HepG2 (cell line): ENCODE measurements at regions of chr6 and their contacts with region 1.

Region 1: DNA sequence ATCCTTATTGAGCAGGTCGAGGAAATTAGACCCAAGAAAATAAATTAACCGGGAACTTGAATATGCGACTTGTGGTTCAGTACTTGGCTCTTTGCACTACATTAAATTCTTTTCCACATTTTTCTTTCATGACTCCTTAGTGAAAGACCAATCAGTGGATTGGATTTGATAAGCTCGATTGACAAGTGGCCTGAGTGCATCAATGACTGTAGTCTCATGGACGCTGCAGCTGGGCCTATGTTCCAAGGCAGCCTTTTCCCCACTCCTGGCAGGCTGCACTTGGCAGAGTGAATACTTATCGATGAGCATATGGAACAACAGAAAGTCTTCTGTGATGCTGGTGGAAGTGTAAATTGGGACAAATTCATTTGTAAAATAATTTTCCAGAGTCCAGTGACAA is 210.8 kb upstream of the EXOC2 start:
- DNase-seq: no peak
- ATAC-seq: no peak
- H3K4me3 ChIP-seq: no peak overlapping the region
- H3K27ac ChIP-seq: no peak overlapping the region
- H3K4me1 ChIP-seq: peaks cover 30% of the 10 kb centered on the region
- H3K27me3 ChIP-seq: peaks cover 2 to 15% of the 10 kb centered on the region in 2 experiments; a peak in 2 of 5 replicates
- CTCF ChIP-seq: no peak
- EP300 ChIP-seq: no peak
- POLR2A ChIP-seq: no peak
- RAD21 ChIP-seq: no peak

Region 2: GRCh38 chr6:373751-374724 is 529.7 kb before region 1 on chr6:
- CTCF ChIA-PET with region 1: no interaction called
- POLR2A ChIA-PET with region 1: no interaction called
- in situ Hi-C with region 1: no loop called
- intact Hi-C with region 1: no loop called
- DNase-seq: no peak
- ATAC-seq: no peak
- H3K4me3 ChIP-seq: no peak overlapping the region
- H3K27ac ChIP-seq: no peak overlapping the region
- H3K4me1 ChIP-seq: no peaks in the 10 kb centered on the region
- H3K27me3 ChIP-seq: peaks cover 8 to 79% of the 10 kb centered on the region in 2 experiments; a peak in 3 of 5 replicates
- CTCF ChIP-seq: 0 out of 2 replicates have a peak, but pooled peaks have one; percentile 4
- EP300 ChIP-seq: no peak
- POLR2A ChIP-seq: no peak
- RAD21 ChIP-seq: no peak

Region 3: DNA sequence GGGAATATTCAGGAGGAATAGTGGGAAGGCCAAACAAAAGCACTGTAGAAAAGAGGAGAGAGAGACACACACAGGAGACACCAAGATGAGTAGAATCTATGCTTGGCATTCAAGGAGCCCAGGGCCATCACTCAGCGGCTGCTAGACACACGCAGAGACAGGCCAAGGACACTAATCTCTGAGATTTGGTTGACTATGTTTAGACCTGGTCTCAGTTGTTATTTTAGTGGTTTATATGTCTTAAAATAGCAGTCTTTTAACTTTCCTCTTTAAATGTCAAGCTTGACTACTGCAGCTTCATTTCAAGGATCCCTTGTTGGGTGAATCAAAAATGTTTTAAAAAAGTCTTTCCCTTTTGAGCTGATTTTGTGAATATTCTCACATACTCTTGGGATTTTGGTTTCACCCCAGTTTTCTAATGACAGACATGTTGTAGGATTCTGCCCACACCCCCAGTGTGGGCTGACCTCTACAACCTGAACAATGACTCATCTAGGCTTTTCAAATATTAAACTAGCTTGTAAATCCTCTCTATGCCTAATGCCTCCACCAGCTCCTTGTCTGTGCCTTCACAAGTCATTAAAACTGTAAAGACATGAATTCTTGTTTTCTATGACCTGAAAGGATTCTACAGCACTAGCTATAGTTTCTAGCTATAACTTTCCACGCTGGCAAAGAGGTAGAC is 68.1 kb before region 1 on chr6:
- CTCF ChIA-PET with region 1: no interaction called
- POLR2A ChIA-PET with region 1: interaction called, 42 read pairs
- in situ Hi-C with region 1: no loop called
- intact Hi-C with region 1: no loop called
- DNase-seq: no peak
- ATAC-seq: peak; percentile 48; the same call in 1 of the 3 replicates
- H3K4me3 ChIP-seq: no peak overlapping the region
- H3K27ac ChIP-seq: no peak overlapping the region
- H3K4me1 ChIP-seq: peaks cover 33% of the 10 kb centered on the region
- H3K27me3 ChIP-seq: peaks cover 1 to 4% of the 10 kb centered on the region in 2 experiments; a peak in 1 of 5 replicates
- CTCF ChIP-seq: no peak
- EP300 ChIP-seq: no peak
- POLR2A ChIP-seq: no peak
- RAD21 ChIP-seq: no peak

Region 4: GRCh38 chr6:1325461-1326309 is 421.9 kb after region 1 on chr6:
- CTCF ChIA-PET with region 1: no interaction called
- POLR2A ChIA-PET with region 1: interaction called, 18 read pairs
- in situ Hi-C with region 1: no loop called
- intact Hi-C with region 1: no loop called
- DNase-seq: peak; percentile 99
- ATAC-seq: peak; percentile 85
- H3K4me3 ChIP-seq: peak overlapping the region; percentile 6 to 34 (median 14); a peak in 2 of 6 replicates
- H3K27ac ChIP-seq: peak overlapping the region; percentile 70
- H3K4me1 ChIP-seq: peaks cover 77% of the 10 kb centered on the region
- H3K27me3 ChIP-seq: no peaks in the 10 kb centered on the region
- CTCF ChIP-seq: no peak
- EP300 ChIP-seq: peak; percentile 81 to 94; a peak in 3 of 4 replicates
- POLR2A ChIP-seq: peak in 1 of 2 experiments; percentile 51; a peak in 1 of 4 replicates
- RAD21 ChIP-seq: no peak

Region 5: DNA sequence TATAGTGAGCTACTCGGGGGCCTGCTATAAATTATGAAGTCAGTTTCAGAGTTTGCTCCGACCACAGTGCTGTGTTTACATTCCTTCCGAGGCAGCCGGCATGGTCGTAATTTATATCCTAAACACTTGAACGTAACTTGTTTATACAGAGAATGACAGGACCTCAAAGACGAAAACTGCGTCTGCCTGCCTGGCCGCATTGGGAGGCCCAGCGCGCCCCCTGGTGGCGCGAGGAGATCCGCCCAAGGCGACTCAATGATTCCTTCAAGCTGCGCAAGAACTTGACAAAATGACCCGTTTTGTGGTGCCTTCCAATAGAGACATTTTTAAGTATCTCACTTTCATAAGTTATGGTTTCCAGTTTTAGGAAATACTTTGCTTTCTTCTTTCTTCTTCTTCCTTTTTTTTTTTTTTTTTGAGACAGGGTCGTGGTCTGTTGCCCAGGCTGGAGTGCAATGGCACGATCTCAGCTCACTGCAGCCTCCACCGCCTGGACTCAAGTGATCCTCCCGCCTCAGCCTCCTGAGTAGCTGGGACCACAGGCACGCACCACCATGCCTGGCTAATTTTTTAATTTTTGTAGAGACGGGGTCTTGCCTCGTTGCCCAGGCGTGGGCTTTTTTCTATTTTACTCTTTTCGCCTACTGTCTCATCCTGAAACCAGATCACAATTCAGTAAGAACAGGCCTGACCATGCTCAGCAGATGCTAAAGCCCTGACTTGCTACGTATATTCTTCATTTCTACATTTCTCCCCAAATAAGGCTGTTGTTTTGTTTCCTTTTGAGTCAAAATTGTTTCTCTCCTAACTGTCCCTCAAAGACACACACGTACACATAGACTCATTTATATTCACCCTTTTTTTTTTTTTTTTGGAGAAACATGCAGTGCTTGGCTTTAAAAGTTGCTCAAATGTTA is 493.4 kb after region 1 on chr6:
- CTCF ChIA-PET with region 1: no interaction called
- POLR2A ChIA-PET with region 1: no interaction called
- in situ Hi-C with region 1: no loop called
- intact Hi-C with region 1: loop called (anchors 5 kb)
- DNase-seq: peak; percentile 31
- ATAC-seq: peak; percentile 67
- H3K4me3 ChIP-seq: no peak overlapping the region
- H3K27ac ChIP-seq: no peak overlapping the region
- H3K4me1 ChIP-seq: no peaks in the 10 kb centered on the region
- H3K27me3 ChIP-seq: peaks cover 35 to 93% of the 10 kb centered on the region in 2 experiments; a peak in 4 of 5 replicates
- CTCF ChIP-seq: peak; percentile 91
- EP300 ChIP-seq: no peak
- POLR2A ChIP-seq: no peak
- RAD21 ChIP-seq: peak; percentile 79

Region 6: DNA sequence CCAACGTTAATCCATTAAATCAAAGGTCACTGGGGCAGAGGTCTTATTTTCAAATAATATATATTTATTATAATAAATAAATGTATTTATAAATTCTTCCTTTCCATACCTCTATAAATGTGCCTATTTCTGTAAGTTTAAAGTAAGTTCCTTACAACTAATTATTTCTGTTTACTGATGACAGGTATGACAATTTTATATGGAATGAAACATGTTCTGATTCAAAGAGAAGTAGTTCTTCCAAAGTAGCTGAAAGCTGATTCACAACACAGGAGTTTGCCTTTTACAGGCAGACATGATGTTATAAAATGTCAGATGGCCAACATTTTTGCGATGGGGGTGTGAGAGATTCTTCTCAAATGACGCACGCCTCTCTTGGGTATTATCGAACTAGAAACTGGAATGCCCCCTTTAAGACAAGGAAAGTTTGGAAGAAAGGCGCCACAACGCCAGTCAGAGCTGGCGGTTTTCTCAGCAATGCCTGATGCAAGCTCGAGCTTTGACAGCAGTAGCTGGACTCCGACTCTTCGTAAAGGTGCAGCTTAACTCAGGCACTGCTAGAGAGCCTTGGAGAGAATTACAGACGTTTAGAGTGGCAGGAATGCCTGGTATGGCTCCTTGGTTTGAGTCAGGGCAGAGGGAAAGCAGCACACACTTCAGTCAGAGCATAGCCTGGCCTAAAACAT is 798.0 kb after region 1 on chr6:
- CTCF ChIA-PET with region 1: no interaction called
- POLR2A ChIA-PET with region 1: no interaction called
- in situ Hi-C with region 1: no loop called
- intact Hi-C with region 1: no loop called
- DNase-seq: no peak
- ATAC-seq: no peak
- H3K4me3 ChIP-seq: no peak overlapping the region
- H3K27ac ChIP-seq: no peak overlapping the region
- H3K4me1 ChIP-seq: peaks cover 24% of the 10 kb centered on the region
- H3K27me3 ChIP-seq: no peaks in the 10 kb centered on the region
- CTCF ChIP-seq: no peak
- EP300 ChIP-seq: no peak
- POLR2A ChIP-seq: no peak
- RAD21 ChIP-seq: no peak